Activated CD4-positive, alpha-beta T cell treated with anti-CD3 and anti-CD28 coated beads for 36 hours (primary cell): ENCODE measurements at regions of chr7 and their contacts with region 1.

Region 1: DNA sequence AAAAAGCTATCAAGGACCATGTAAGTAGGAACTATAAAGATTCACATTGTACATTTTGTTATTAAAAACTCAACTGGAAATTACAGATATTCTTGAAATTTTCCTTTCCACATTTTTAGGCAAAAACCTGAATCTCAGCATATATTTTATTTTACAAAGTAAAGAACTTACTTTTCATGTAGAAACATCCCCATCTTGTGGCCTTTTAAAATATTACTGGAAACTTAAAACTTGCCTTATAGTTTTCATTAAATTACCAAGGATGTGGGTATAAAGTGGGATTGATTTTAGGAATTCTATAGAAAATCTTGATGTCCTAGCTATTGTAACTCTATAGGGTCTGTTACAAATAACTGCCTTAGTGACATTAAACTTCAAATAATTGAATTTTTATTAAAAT is 10.6 kb downstream of the DBF4 start:
- DNase-seq: no peak
- ATAC-seq: no peak
- H3K4me3 Mint-ChIP-seq: no peak overlapping the region
- H3K27ac Mint-ChIP-seq: no peak overlapping the region
- H3K4me1 Mint-ChIP-seq: peaks cover 6% of the 10 kb centered on the region
- H3K27me3 Mint-ChIP-seq: no peaks in the 10 kb centered on the region

Region 2: DNA sequence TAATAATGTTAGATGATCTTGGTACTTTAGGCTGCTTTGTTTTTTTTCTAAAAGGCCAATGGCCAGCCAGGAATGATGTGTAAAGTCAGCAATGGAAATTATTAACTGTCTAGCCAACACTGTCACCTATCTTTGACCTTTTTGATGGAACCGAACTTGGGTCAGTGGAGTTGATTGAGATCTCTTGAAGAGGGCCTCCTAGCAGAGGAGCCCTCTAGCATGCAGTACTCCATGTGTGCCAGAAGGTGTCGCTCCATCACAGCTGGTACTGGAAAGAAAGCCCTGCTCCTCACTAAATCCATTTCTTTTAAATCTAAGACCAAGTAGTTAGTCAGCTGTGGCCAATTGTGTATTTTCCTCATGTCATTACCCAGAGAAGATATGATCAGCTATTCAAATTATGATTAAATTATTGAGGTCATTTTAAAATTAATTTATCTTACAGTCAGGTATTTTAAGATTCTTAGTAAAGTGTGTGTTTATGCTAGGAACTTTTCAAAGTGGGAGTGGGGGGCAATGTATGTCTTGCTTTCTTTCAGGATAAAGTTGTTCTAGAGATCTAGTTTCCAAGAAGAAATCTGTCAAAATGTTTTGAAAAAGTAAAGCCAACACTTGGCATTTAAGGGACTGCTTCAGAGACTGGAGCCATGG is 574.5 kb before region 1 on chr7:
- CTCF ChIA-PET with region 1: no interaction called
- POLR2A ChIA-PET with region 1: no interaction called
- intact Hi-C with region 1: loop called in 1 of 2 experiments (anchors 1 kb)
- DNase-seq: peak; percentile 76
- ATAC-seq: peak; percentile 86
- H3K4me3 Mint-ChIP-seq: no peak overlapping the region
- H3K27ac Mint-ChIP-seq: no peak overlapping the region
- H3K4me1 Mint-ChIP-seq: peaks cover 11% of the 10 kb centered on the region
- H3K27me3 Mint-ChIP-seq: no peaks in the 10 kb centered on the region

Region 3: DNA sequence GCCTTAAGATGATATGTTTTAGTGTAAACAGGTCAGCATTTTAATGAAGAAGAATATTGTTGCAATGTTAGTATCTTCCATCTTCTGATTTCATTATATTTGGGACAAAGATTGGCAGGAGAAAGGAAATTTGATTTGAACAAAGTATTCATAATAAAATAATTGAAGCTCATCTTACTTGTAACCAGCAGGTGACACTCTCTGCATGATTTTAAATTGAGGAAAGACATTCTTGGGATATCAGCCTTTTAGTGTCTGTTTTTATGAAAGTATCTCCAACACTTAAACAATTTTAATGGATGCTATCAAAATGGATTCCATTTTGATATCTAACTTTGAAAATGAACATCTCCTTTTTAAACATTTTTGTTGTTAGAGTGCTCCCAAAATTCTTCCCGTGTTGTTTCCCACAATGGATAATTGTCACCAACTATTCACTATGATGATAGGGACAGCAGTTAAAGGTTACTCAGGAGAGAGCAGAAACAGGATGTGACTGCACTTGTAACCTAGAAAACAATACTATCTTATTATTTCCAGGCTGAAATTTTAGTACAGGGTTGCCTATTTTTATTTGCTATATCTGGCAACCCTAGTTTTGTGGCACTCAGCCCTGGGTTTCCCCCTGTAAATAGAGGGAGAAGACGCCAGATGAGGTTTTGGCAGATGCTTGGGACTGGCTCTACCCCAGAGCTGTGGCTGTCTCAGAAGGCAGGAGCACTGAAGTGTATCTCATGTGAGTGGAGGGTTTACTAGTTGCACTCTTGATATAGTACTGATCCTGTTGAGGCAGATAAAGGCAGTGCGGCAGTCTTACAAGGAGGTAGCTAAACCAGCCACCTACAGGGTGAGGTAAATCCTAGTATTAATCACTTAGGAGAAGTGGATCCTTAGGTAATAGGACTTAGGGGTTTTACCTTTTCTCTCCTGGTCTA is 380.4 kb before region 1 on chr7:
- CTCF ChIA-PET with region 1: interaction called, 14 read pairs
- POLR2A ChIA-PET with region 1: no interaction called
- intact Hi-C with region 1: loop called in 1 of 2 experiments (anchors 1 kb)
- DNase-seq: no peak
- ATAC-seq: no peak
- H3K4me3 Mint-ChIP-seq: no peak overlapping the region
- H3K27ac Mint-ChIP-seq: no peak overlapping the region
- H3K4me1 Mint-ChIP-seq: no peaks in the 10 kb centered on the region
- H3K27me3 Mint-ChIP-seq: no peaks in the 10 kb centered on the region

Region 4: GRCh38 chr7:87797798-87798403 is 89.0 kb before region 1 on chr7:
- CTCF ChIA-PET with region 1: interaction called, 13 read pairs
- POLR2A ChIA-PET with region 1: no interaction called
- intact Hi-C with region 1: loop called (anchors 1 kb)
- DNase-seq: no peak
- ATAC-seq: no peak
- H3K4me3 Mint-ChIP-seq: no peak overlapping the region
- H3K27ac Mint-ChIP-seq: no peak overlapping the region
- H3K4me1 Mint-ChIP-seq: no peaks in the 10 kb centered on the region
- H3K27me3 Mint-ChIP-seq: peaks cover 5% of the 10 kb centered on the region